Esophagus squamous epithelium (tissue), 5 donors: ENCODE measurements at regions of chr2 and their contacts with region 1.

Region 1: GRCh38 chr2:99337113-99338028 is at the start of gene EIF5B:
- DNase-seq: peak; percentile 80
- H3K4me3 ChIP-seq: peak within 1 kb of the TSS; percentile 69 to 96 (median 75)
- H3K27ac ChIP-seq: peak within 1 kb of the TSS; percentile 84 to 97 (median 94)
- H3K4me1 ChIP-seq: peaks cover 10 to 55% (median 33%) of the 10 kb centered on the region in 3 donors
- H3K27me3 ChIP-seq: no peaks in the 10 kb centered on the region
- CTCF ChIP-seq: peak; percentile 13 to 57 (median 44)
- POLR2A ChIP-seq: peak in 1 of 4 donors; percentile 68
- total RNA-seq, gene EIF5B: 19.4 to 40.7 (median 30.0) TPM

Region 2: GRCh38 chr2:98999159-98999558 is 338.2 kb before region 1 on chr2:
- intact Hi-C with region 1: no loop called
- DNase-seq: no peak
- H3K4me3 ChIP-seq: no peak overlapping the region
- H3K27ac ChIP-seq: no peak overlapping the region
- H3K4me1 ChIP-seq: no peaks in the 10 kb centered on the region
- H3K27me3 ChIP-seq: no peaks in the 10 kb centered on the region
- CTCF ChIP-seq: no peak
- POLR2A ChIP-seq: no peak

Region 3: DNA sequence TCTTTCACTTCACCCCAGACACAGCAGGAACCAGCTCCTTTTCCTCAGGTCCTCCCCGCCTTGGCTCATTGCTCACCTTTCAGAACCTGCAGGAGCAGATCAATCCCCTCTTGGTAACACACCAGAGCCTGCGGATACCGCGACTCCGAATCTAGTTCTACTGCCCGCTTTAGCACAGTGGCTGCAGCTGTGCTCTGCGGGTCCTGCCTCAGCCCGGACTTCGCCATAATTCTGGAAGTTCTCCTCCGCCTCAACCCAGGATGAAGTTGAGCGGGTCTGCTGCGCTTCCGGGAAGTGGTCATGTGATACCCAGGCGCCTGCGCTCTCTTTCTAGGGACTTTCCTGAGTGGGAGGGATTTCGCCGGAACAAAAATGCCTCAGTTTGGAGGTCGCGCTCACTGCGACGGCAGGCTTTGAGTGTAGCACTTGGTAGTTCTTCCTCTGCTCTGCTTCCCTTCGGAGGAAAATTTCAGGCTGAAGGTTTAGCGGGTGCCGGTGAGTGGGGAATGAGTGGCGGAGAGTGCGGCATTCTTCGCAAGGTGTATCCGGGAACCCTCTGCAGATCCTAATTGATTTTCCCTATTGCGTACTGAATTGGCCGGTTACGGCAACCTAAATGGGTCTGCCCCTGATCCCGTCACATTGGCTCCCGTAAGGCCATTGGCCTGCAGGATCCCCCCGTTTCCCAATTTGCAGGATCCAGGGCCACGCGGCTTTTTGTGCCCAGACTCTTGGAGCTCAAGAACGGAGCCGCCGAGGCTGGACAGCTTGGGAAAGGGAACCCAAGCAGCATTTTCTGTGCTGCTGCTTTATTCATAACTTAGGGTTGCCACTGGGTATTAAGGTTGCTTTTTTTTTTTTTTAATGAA is 156.4 kb before region 1 on chr2 and contains the starts of genes MITD1 and MRPL30:
- intact Hi-C with region 1: loop called (anchors 10 kb)
- DNase-seq: peak; percentile 56
- H3K4me3 ChIP-seq: peak within 1 kb of the TSS; percentile 58 to 97 (median 63)
- H3K27ac ChIP-seq: peak within 1 kb of the TSS; percentile 67 to 81 (median 79)
- H3K4me1 ChIP-seq: peaks cover 14 to 55% (median 21%) of the 10 kb centered on the region in 3 donors
- H3K27me3 ChIP-seq: no peaks in the 10 kb centered on the region
- CTCF ChIP-seq: peak in 1 of 6 experiments; percentile 50
- POLR2A ChIP-seq: peak in 2 of 4 donors; percentile 32 to 45
- total RNA-seq, gene MITD1: 10.8 to 32.3 (median 28.7) TPM
- total RNA-seq, gene MRPL30: 18.3 to 35.9 (median 32.8) TPM

Region 4: GRCh38 chr2:99489761-99490622 is 152.6 kb after region 1 on chr2 and contains the start of gene REV1:
- intact Hi-C with region 1: loop called (anchors 10 kb)
- DNase-seq: peak; percentile 83
- H3K4me3 ChIP-seq: peak within 1 kb of the TSS; percentile 78 to 100 (median 92)
- H3K27ac ChIP-seq: peak within 1 kb of the TSS; percentile 94 to 100 (median 99)
- H3K4me1 ChIP-seq: peaks cover 22 to 37% (median 23%) of the 10 kb centered on the region in 3 donors
- H3K27me3 ChIP-seq: no peaks in the 10 kb centered on the region
- CTCF ChIP-seq: peak; percentile 74 to 97 (median 84)
- POLR2A ChIP-seq: peak in 2 of 4 donors; percentile 67 to 85
- total RNA-seq, gene REV1: 22.5 to 69.2 (median 39.8) TPM